ENCODE measurements at regions of chr22 and their contacts with region 1.

Region 1: GRCh38 chr22:31080848-31081649 is at the start of gene SMTN:
- DNase-seq: peak; percentile 84 to 91 (median 87)
- ATAC-seq: peak; percentile 82
- H3K4me3 ChIP-seq: peak within 1 kb of the TSS; percentile 53
- H3K27ac ChIP-seq: peak within 1 kb of the TSS; percentile 68
- H3K4me1 ChIP-seq: peaks cover 24 to 48% of the 10 kb centered on the region in 2 experiments
- H3K27me3 ChIP-seq: no peaks in the 10 kb centered on the region
- CTCF ChIP-seq: no peak
- EP300 ChIP-seq: no peak
- POLR2A ChIP-seq: peak; percentile 79
- RAD21 ChIP-seq: no peak
- polyA plus RNA-seq, gene SMTN: 2.5 to 3.4 TPM

Region 2: DNA sequence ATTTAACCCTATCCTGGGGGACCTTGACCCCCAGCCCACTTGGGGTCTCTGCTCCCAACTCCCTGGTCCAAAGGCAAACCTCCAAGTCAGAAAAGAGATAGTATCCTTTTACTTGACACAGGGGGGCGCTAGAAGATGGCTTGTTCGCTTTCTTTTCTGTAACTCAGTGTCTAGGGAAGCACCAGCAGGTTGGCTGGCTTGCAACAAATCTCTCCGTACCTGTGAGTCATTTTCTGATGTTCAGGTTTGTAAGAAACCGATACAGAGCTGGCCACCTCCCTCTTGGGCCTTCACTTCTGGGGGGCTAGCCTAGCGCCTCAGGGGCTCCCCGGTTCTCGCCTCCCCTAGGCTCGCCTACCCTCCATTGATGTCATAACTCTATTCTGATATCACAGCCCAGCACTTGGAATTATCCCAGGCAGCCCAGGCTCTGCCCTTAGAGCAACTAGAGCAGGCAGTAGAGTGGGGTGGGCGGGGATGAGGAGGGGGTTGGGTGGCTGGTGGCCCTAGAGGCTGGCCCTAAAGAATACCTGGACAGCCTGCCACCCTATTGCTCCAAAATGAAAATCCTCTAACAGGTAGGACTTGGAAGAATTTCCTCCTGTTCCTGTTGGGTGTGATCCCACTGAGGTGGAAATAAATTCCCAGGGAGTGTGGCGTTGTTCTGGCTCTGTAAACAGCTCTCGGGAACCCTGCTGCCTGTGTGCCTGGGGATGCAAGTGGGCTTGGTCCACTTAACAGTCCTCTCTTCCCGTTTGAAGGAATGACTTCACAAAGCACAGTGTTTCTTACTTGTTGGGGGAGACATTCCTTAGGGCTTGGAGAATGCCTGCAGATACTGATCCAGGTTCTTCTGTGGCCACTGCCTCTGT is 317.0 kb before region 1 on chr22:
- CTCF ChIA-PET with region 1: interaction called, 3 read pairs
- POLR2A ChIA-PET with region 1: no interaction called
- in situ Hi-C with region 1: loop called (anchors 10 kb)
- intact Hi-C with region 1: no loop called
- DNase-seq: peak; percentile 49 to 75 (median 57)
- ATAC-seq: peak; percentile 80
- H3K4me3 ChIP-seq: no peak overlapping the region
- H3K27ac ChIP-seq: no peak overlapping the region
- H3K4me1 ChIP-seq: no peaks in the 10 kb centered on the region; a peak in 1 of 5 replicates
- H3K27me3 ChIP-seq: peaks cover 0 to 9% of the 10 kb centered on the region in 2 experiments; a peak in 1 of 5 replicates
- CTCF ChIP-seq: peak; percentile 67 to 80 (median 75)
- EP300 ChIP-seq: no peak
- POLR2A ChIP-seq: no peak
- RAD21 ChIP-seq: peak; percentile 67 to 82

Region 3: DNA sequence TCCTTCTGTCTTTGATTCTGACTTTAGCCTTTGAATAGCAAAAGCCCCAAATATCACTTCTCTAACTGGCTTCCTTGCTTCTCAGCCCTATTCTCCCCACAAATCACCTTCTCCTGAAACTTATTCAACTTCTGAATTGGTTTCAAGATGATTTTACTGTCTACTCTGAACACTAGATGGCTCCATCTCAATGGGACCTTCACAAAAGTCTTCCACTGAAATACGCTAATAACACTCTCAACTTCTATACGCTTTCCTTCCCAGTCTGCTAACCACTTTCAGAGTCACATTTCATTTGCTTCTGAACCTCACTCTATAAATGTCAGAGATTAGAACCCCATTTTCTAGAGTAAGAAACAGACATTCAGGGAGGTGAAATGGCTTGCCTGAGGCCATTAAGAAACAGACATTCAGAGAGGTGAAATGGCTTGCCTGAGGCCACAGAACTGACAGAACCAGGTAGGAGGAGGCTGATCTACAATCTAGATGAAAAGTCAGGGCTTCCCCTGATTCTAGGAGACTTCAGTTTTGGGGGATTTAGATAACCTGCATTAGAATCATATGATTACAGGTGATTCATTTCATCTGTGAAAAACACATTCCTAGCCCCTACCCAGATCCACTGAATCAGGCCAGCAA is 133.1 kb before region 1 on chr22:
- CTCF ChIA-PET with region 1: interaction called, 21 read pairs
- POLR2A ChIA-PET with region 1: interaction called, 6 read pairs
- in situ Hi-C with region 1: loop called (anchors 5 kb)
- intact Hi-C with region 1: loop called (anchors 2 kb)
- DNase-seq: peak in 3 of 4 experiments; percentile 15 to 19 (median 18)
- ATAC-seq: no peak
- H3K4me3 ChIP-seq: no peak overlapping the region
- H3K27ac ChIP-seq: no peak overlapping the region
- H3K4me1 ChIP-seq: no peaks in the 10 kb centered on the region
- H3K27me3 ChIP-seq: no peaks in the 10 kb centered on the region
- CTCF ChIP-seq: peak; percentile 22 to 62 (median 26); a peak in 3 of 6 replicates
- EP300 ChIP-seq: no peak
- POLR2A ChIP-seq: no peak
- RAD21 ChIP-seq: peak; percentile 51 to 63

Region 4: DNA sequence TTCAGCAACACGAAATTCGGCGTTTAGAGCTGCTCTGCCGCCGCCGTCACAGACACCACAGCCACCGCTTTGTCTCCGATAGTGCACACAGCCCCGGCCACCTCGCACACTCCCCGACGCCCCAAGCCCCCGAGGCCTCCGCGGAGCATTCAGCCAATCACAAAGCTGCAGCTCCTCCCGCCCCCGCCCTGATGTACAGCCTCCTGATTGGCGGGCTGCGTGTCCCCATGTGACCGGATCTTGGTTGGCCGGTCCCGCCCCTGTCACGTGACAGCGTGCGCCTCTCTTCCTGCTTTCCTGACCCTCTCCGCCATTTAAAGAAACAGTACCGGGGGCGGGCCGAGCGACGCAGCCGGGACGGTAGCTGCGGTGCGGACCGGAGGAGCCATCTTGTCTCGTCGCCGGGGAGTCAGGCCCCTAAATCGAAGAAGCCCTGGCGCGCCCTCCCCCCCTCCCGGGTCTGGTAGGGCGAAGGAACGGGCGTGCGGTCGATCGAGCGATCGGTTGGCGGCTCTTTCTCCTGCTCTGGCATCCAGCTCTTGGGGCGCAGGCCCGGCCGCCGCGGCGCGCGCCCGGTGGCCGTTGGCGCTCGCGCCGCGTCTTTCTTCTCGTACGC is 112.0 kb before region 1 on chr22 and contains the start of gene TUG1:
- CTCF ChIA-PET with region 1: interaction called, 4 read pairs
- POLR2A ChIA-PET with region 1: interaction called, 6 read pairs
- in situ Hi-C with region 1: no loop called
- intact Hi-C with region 1: loop called (anchors 2 kb)
- DNase-seq: peak; percentile 94 to 98 (median 96)
- ATAC-seq: peak; percentile 90
- H3K4me3 ChIP-seq: peak within 1 kb of the TSS; percentile 90
- H3K27ac ChIP-seq: peak within 1 kb of the TSS; percentile 92
- H3K4me1 ChIP-seq: peaks cover 9 to 17% of the 10 kb centered on the region in 2 experiments; a peak in 4 of 5 replicates
- H3K27me3 ChIP-seq: no peaks in the 10 kb centered on the region
- CTCF ChIP-seq: no peak
- EP300 ChIP-seq: 0 out of 2 replicates have a peak, but pooled peaks have one; percentile 3
- POLR2A ChIP-seq: peak; percentile 77
- RAD21 ChIP-seq: no peak
- polyA plus RNA-seq, gene TUG1: 24.7 to 25.0 TPM

Region 5: DNA sequence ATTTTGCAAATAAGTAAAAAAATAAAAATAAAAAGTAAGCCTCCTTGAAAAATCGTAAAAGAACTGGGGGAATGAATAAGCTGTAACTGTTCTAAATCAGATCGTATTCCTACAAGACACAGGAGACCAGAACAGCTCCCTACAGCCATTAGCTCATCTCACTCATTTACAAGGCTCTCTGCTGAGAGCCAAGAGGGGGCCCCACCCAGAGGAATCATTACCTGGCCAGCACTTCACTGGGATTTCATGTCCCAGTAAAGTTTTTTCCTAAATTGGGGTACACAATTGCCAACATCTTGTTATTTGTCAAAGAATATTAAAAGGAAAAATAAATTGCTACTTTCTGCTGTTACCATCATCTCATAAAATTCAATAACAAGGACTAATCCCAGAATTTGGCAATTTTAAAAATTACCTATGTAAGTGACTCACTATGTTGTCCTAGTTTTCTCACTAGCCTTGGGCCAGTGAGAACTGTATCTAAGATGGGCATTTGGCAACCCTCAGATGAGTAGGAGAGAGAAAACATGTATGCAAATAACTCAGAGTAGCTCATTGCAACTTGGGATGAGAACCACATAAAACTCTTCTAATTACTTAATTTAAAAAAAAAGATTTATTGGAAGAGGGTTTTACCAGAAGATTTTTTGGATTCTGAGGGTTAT is 18.4 kb before region 1 on chr22:
- CTCF ChIA-PET with region 1: interaction called, 3 read pairs
- POLR2A ChIA-PET with region 1: interaction called, 15 read pairs
- in situ Hi-C with region 1: no loop called
- intact Hi-C with region 1: no loop called
- DNase-seq: no peak
- ATAC-seq: no peak
- H3K4me3 ChIP-seq: no peak overlapping the region
- H3K27ac ChIP-seq: no peak overlapping the region
- H3K4me1 ChIP-seq: peaks cover 14 to 15% of the 10 kb centered on the region in 2 experiments; a peak in 3 of 5 replicates
- H3K27me3 ChIP-seq: no peaks in the 10 kb centered on the region
- CTCF ChIP-seq: no peak
- EP300 ChIP-seq: no peak
- POLR2A ChIP-seq: no peak
- RAD21 ChIP-seq: no peak

Region 6: GRCh38 chr22:31095637-31096249 is 14.7 kb after region 1 on chr22:
- CTCF ChIA-PET with region 1: no interaction called
- POLR2A ChIA-PET with region 1: interaction called, 12 read pairs
- in situ Hi-C with region 1: no loop called
- intact Hi-C with region 1: no loop called
- DNase-seq: no peak
- ATAC-seq: no peak
- H3K4me3 ChIP-seq: no peak overlapping the region
- H3K27ac ChIP-seq: no peak overlapping the region
- H3K4me1 ChIP-seq: peaks cover 5 to 18% of the 10 kb centered on the region in 2 experiments; a peak in 3 of 5 replicates
- H3K27me3 ChIP-seq: no peaks in the 10 kb centered on the region
- CTCF ChIP-seq: no peak
- EP300 ChIP-seq: no peak
- POLR2A ChIP-seq: no peak
- RAD21 ChIP-seq: no peak

Region 7: DNA sequence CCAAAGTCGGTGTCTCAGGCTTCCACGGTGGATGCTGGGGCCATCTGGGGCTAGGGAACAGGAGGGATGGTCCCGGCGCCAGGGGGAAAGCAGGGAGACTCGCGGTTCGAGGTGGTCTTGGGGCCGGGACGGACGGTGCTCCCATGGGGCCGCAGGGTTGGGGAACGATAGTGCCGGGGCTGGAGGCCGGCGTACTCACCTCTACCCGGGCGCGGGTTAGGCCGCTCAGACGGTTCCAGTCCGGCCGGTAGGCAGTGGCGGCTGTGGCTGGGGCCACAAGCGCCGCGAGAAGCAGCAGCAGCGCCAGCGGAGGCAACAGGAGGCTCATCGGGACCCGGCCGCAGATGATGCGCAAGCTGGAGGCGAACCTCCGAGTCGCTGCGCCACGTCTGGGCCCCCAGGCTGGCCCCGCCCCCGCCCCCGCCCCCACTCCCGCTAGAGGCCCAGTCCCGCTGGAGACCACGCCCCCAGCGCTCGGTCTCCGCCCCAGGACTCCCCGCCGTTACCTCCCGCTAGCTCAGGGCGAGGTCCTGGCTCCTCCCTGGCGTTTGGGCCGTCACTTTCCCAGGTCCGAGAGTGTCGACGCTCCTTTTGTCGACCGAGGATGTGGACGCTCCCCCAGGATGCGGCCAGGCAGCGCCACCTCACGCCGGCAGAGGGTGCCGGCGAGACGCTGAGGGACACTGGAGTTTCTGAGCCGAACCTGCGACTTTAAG is 26.3 kb after region 1 on chr22 and contains the start of gene SELENOM:
- CTCF ChIA-PET with region 1: no interaction called
- POLR2A ChIA-PET with region 1: interaction called, 18 read pairs
- in situ Hi-C with region 1: no loop called
- intact Hi-C with region 1: no loop called
- DNase-seq: peak; percentile 93 to 96 (median 94)
- ATAC-seq: peak; percentile 100
- H3K4me3 ChIP-seq: peak within 1 kb of the TSS; percentile 52
- H3K27ac ChIP-seq: peak within 1 kb of the TSS; percentile 68
- H3K4me1 ChIP-seq: peaks cover 2 to 17% of the 10 kb centered on the region in 2 experiments; a peak in 4 of 5 replicates
- H3K27me3 ChIP-seq: no peaks in the 10 kb centered on the region
- CTCF ChIP-seq: peak; percentile 90 to 92 (median 90)
- EP300 ChIP-seq: no peak
- POLR2A ChIP-seq: no peak
- RAD21 ChIP-seq: peak; percentile 88 to 89
- polyA plus RNA-seq, gene SELENOM: 1.2 to 2.9 TPM

Region 8: GRCh38 chr22:31122532-31123291 is 41.7 kb after region 1 on chr22 and contains the start of gene INPP5J:
- CTCF ChIA-PET with region 1: no interaction called
- POLR2A ChIA-PET with region 1: no interaction called
- in situ Hi-C with region 1: no loop called
- intact Hi-C with region 1: no loop called
- DNase-seq: peak in 1 of 4 experiments; percentile 24
- ATAC-seq: peak; percentile 71
- H3K4me3 ChIP-seq: peak within 1 kb of the TSS; percentile 8; the same call in 1 of the 2 replicates
- H3K27ac ChIP-seq: no peak within 1 kb of the TSS
- H3K4me1 ChIP-seq: peaks cover 29 to 60% of the 10 kb centered on the region in 2 experiments
- H3K27me3 ChIP-seq: no peaks in the 10 kb centered on the region
- CTCF ChIP-seq: no peak
- EP300 ChIP-seq: no peak
- POLR2A ChIP-seq: no peak
- RAD21 ChIP-seq: no peak
- polyA plus RNA-seq, gene INPP5J: 0.10 to 0.78 TPM

Region 9: GRCh38 chr22:31262312-31263080 is 181.4 kb after region 1 on chr22:
- CTCF ChIA-PET with region 1: no interaction called
- POLR2A ChIA-PET with region 1: no interaction called
- in situ Hi-C with region 1: no loop called
- intact Hi-C with region 1: no loop called
- DNase-seq: no peak
- ATAC-seq: no peak
- H3K4me3 ChIP-seq: no peak overlapping the region
- H3K27ac ChIP-seq: no peak overlapping the region
- H3K4me1 ChIP-seq: no peaks in the 10 kb centered on the region
- H3K27me3 ChIP-seq: no peaks in the 10 kb centered on the region
- CTCF ChIP-seq: no peak
- EP300 ChIP-seq: no peak
- POLR2A ChIP-seq: no peak
- RAD21 ChIP-seq: no peak

Measured in K562 (cell line).